ENCODE measurements at regions of chr3 and their contacts with region 1.

Region 1: DNA sequence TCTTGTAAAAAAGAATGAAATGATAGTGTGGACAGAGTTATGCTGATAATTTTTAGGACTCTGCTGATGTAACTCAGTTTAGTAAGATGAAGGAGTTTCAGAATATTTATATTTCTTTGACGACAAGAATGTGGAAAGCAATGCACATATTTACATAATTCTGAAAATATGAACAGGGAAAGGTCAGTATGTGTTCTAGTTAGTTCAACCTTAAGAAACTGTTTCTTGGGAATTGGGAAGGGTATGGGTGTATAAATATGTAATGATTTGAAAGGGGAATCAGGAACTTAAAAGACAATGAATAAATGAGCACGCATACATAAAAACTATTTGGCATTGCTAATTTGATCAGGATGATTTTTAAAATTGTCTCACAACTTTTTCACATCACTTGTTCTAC is 1226.1 kb downstream of the SI start:
- DNase-seq: no peak
- ATAC-seq: no peak
- H3K4me3 ChIP-seq: no peak overlapping the region
- H3K27ac ChIP-seq: no peak overlapping the region
- H3K4me1 ChIP-seq: no peaks in the 10 kb centered on the region
- H3K27me3 ChIP-seq: no peaks in the 10 kb centered on the region
- CTCF ChIP-seq: no peak
- EP300 ChIP-seq: no peak
- POLR2A ChIP-seq: no peak
- RAD21 ChIP-seq: no peak

Region 2: DNA sequence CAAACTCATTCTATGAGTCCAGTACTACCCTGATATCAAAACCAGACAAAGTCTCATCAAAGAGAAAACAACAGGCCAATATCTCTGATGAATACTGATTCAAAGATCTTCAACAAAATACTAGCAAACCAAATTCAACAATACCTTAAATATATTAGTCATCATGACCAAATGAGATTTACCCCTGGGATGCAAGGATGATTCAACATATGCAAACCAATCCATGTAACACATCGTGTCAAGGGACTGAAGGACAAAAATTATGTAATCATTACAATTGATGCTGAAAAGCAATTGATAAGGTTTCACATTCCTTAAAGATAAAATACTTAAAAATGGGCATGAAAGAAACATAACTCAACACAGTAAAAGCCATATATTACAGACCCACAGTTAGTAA is 250.8 kb before region 1 on chr3:
- CTCF ChIA-PET with region 1: no interaction called
- POLR2A ChIA-PET with region 1: no interaction called
- RAD21 ChIA-PET with region 1: no interaction called
- SMC1A ChIA-PET with region 1: no interaction called
- in situ Hi-C with region 1: no loop called
- intact Hi-C with region 1: no loop called
- DNase-seq: no peak
- ATAC-seq: no peak
- H3K4me3 ChIP-seq: no peak overlapping the region
- H3K27ac ChIP-seq: no peak overlapping the region
- H3K4me1 ChIP-seq: no peaks in the 10 kb centered on the region
- H3K27me3 ChIP-seq: no peaks in the 10 kb centered on the region
- CTCF ChIP-seq: no peak
- EP300 ChIP-seq: no peak
- POLR2A ChIP-seq: no peak
- RAD21 ChIP-seq: no peak

Region 3: GRCh38 chr3:163817015-163817414 is 35.2 kb before region 1 on chr3:
- CTCF ChIA-PET with region 1: no interaction called
- POLR2A ChIA-PET with region 1: no interaction called
- RAD21 ChIA-PET with region 1: no interaction called
- SMC1A ChIA-PET with region 1: no interaction called
- in situ Hi-C with region 1: no loop called
- intact Hi-C with region 1: no loop called
- DNase-seq: no peak
- ATAC-seq: no peak
- H3K4me3 ChIP-seq: no peak overlapping the region
- H3K27ac ChIP-seq: no peak overlapping the region
- H3K4me1 ChIP-seq: no peaks in the 10 kb centered on the region
- H3K27me3 ChIP-seq: no peaks in the 10 kb centered on the region
- CTCF ChIP-seq: no peak
- EP300 ChIP-seq: no peak
- POLR2A ChIP-seq: no peak
- RAD21 ChIP-seq: no peak

Region 4: DNA sequence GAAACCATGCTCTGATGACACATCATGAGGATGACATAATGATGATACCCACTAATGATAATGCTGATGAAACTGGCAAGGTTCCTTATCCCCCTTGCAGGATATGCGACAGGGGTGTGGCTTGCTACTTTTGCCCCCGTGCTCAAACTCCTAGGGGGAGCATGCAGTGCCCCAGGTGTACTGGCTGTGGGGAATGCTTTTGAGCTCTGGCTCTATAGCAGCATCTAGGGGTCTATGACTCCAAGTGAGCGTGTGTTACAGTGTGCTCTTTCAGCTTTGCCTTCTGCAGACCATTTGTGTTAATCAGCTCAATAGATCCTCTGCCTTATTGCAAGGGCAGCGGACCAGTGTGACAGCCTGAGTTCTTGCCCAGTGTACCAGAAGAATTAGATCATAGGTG is 13.5 kb before region 1 on chr3:
- CTCF ChIA-PET with region 1: no interaction called
- POLR2A ChIA-PET with region 1: no interaction called
- RAD21 ChIA-PET with region 1: no interaction called
- SMC1A ChIA-PET with region 1: no interaction called
- in situ Hi-C with region 1: no loop called
- intact Hi-C with region 1: no loop called
- DNase-seq: no peak
- ATAC-seq: peak; percentile 24; the same call in 2 of the 3 replicates
- H3K4me3 ChIP-seq: no peak overlapping the region
- H3K27ac ChIP-seq: no peak overlapping the region
- H3K4me1 ChIP-seq: no peaks in the 10 kb centered on the region
- H3K27me3 ChIP-seq: no peaks in the 10 kb centered on the region
- CTCF ChIP-seq: no peak
- EP300 ChIP-seq: no peak
- POLR2A ChIP-seq: no peak
- RAD21 ChIP-seq: no peak

Region 5: GRCh38 chr3:163863146-163863545 is 10.9 kb after region 1 on chr3:
- CTCF ChIA-PET with region 1: no interaction called
- POLR2A ChIA-PET with region 1: no interaction called
- RAD21 ChIA-PET with region 1: no interaction called
- SMC1A ChIA-PET with region 1: interaction called, 10 read pairs
- in situ Hi-C with region 1: no loop called
- intact Hi-C with region 1: no loop called
- DNase-seq: no peak
- ATAC-seq: no peak
- H3K4me3 ChIP-seq: no peak overlapping the region
- H3K27ac ChIP-seq: no peak overlapping the region
- H3K4me1 ChIP-seq: no peaks in the 10 kb centered on the region
- H3K27me3 ChIP-seq: no peaks in the 10 kb centered on the region
- CTCF ChIP-seq: no peak
- EP300 ChIP-seq: no peak
- POLR2A ChIP-seq: no peak
- RAD21 ChIP-seq: no peak

Measured in GM12878 (cell line).